AG04450 (cell line): ENCODE measurements at regions of chr22 and their contacts with region 1.

Region 1: DNA sequence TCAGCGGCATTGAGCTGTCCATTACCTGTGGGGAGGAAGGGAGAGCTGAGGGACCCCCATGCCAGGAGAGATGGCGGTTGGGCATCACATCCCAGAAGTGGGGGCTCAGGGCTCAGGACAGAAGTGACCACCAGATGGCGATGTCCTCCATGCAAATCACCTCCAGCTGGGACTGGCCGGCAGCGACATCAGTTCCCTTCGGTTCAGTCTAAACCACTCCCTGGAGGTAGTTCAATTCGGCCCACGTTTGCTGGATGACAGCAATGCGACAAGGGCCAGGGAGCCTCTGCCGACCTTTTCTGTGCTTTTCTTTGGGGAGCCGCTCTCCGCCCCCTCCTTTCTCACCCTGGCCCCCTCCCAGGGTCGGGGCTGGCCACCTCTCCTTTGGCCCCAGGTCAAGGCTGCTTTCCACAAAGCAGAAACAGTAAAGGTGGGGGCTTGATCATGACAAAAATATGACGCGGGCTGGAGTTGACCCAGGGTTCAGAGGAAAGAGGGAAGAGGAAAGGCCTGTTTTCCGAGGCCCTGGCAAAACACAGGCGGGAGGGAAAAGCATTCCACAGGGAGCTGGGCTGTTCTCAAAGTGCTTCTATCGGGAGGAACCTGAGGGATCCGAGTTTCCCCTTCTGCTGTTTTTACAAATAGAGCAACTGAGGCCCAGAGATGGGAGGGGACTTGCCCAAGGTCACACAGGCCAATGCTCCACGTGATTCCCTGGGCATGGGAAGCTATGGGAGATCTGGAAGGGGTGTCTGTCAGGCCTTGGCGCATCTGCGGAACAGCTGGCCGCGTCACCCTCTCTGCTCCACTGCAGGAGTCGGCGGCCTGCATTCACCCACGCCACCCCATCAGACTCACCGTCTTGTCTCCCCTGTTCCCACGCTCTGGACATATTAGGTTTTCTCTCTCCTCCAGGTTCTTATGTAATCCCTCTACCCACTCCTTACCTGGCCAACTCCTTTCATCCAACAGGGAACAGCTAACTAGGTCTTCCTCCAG is 54.7 kb downstream of the FBXO7 start:
- DNase-seq: peak; percentile 77
- H3K4me3 ChIP-seq: no peak overlapping the region
- H3K27ac ChIP-seq: no peak overlapping the region
- H3K27me3 ChIP-seq: peaks cover 4% of the 10 kb centered on the region
- CTCF ChIP-seq: peak; percentile 86

Region 2: DNA sequence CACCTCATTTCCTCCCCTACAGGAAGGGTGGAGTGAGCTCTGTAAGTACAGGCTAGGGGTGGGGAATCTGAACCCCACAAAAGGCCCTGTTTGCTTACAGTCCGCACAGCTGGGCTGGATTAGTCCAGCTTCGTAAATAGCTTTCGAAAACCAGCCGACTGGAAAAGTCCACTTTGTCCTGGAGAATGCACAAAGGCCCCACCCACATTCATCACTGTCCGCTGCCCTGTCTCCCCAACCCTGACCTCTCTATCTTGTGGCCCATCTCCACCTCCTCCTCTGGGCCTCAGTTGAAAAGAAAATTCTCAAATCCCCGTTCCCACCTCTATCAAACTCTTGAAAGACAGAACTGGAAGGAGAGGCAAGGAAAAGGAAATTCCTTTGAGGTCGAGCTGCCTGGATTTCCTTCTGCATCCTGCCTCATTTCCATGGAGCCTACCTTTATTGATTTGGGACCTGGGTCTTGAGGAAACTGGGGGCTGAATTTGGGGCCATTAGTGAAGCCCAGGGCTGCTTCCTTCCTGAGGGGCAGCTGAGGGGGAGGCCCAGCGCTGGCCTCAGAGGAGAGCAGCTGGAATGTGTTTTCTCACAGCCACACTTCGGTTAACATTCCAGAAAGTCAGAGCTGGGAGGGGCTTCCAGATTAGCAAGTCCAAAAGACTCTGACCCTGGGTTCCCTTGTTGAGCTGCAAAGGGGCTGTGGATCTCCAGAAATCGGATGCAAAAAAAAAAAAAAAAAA is 92.9 kb after region 1 on chr22:
- CTCF ChIA-PET with region 1: interaction called, 11 read pairs
- POLR2A ChIA-PET with region 1: interaction called, 13 read pairs
- DNase-seq: peak; percentile 94
- H3K4me3 ChIP-seq: peak overlapping the region; percentile 25
- H3K27ac ChIP-seq: peak overlapping the region; percentile 98
- H3K27me3 ChIP-seq: no peaks in the 10 kb centered on the region
- CTCF ChIP-seq: no peak

Region 3: DNA sequence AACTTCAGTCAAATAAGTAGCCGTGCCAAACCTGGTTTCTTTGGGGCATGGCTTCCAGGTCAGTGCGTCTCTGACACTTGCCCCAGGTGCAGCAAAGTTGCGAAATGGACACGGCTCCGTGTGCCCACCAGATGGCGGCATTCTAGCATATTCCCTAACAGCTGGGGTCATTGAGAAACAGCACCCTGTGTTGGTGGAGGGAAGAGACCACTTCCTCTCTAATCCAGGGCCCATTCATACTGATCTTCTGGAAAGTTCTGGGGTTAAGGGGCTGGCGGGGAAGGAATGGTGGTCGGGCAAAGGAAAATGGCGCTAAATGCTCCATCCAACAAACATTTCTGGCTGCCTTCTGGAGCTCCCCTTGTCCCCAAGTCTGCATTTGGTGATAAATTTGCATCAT is 131.0 kb after region 1 on chr22:
- CTCF ChIA-PET with region 1: interaction called, 11 read pairs
- POLR2A ChIA-PET with region 1: no interaction called
- DNase-seq: no peak
- H3K4me3 ChIP-seq: no peak overlapping the region
- H3K27ac ChIP-seq: peak overlapping the region; percentile 96
- H3K27me3 ChIP-seq: no peaks in the 10 kb centered on the region
- CTCF ChIP-seq: peak; percentile 68

Region 4: DNA sequence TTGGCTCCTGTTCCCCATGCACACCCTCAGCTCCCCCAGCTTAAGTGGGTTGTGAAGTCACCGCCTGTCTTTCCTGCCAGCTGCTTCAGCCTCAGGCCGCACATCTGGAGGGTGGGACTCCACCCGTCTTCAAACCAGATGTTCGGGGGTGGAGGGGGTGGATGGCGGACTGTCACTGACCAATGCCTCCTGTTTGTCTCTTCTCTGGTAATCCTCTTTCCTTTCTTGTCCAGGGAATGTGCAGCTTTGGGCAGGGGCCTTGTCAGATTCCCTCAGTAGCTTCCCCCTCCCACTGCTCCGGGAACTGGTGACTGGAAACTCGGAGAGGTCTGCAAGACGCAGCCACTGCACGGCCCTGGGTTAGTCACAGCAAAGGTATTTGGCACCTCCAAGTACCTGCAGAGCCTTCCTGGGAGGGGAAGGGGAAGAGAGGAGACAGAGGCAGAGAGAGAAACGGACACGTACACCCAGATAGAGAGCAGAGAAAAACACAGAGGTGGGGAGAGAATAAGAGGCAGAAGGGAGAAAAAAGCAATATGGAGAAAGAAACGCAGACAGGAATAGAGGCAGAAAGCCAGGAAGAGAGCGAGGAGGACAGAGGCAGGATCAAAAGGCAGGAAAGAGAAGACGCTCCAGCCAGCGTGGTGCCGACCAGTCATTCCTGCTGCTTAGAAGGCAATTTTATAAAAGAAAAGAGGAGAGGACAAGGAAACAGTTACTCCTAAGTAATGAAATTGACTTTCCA is 216.1 kb after region 1 on chr22:
- CTCF ChIA-PET with region 1: no interaction called
- POLR2A ChIA-PET with region 1: no interaction called
- DNase-seq: no peak
- H3K4me3 ChIP-seq: peak overlapping the region; percentile 14; the same call in 1 of the 2 replicates
- H3K27ac ChIP-seq: no peak overlapping the region
- H3K27me3 ChIP-seq: peaks cover 4% of the 10 kb centered on the region
- CTCF ChIP-seq: no peak

Region 5: GRCh38 chr22:32804531-32805360 is 275.5 kb after region 1 on chr22:
- CTCF ChIA-PET with region 1: interaction called, 330 read pairs
- POLR2A ChIA-PET with region 1: interaction called, 37 read pairs
- DNase-seq: no peak
- H3K4me3 ChIP-seq: peak overlapping the region; percentile 97
- H3K27ac ChIP-seq: peak overlapping the region; percentile 47
- H3K27me3 ChIP-seq: no peaks in the 10 kb centered on the region
- CTCF ChIP-seq: no peak

Region 6: DNA sequence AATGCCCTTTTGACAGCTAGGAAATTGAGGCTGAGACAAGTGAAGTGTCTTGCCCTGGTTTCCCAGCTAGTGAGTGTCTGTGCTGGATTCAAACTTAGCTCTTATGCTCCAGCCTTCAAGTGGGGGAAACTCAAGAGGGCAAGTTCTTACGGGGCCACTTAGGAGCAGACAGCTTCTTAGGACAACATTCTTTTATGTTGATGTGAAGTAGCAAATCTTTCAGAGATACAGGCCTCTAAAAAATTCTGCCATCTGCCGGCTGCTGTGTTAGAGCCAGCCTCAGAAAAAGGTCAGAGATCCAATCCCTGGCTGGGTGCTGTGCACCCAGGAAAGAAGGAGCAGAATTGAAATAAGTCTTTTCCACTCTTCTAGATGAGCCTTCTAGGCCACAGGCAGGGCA is 298.9 kb after region 1 on chr22:
- CTCF ChIA-PET with region 1: interaction called, 18 read pairs
- POLR2A ChIA-PET with region 1: no interaction called
- DNase-seq: no peak
- H3K4me3 ChIP-seq: no peak overlapping the region
- H3K27ac ChIP-seq: peak overlapping the region; percentile 39
- H3K27me3 ChIP-seq: no peaks in the 10 kb centered on the region
- CTCF ChIP-seq: no peak; the same call in 1 of the 2 replicates

Region 7: DNA sequence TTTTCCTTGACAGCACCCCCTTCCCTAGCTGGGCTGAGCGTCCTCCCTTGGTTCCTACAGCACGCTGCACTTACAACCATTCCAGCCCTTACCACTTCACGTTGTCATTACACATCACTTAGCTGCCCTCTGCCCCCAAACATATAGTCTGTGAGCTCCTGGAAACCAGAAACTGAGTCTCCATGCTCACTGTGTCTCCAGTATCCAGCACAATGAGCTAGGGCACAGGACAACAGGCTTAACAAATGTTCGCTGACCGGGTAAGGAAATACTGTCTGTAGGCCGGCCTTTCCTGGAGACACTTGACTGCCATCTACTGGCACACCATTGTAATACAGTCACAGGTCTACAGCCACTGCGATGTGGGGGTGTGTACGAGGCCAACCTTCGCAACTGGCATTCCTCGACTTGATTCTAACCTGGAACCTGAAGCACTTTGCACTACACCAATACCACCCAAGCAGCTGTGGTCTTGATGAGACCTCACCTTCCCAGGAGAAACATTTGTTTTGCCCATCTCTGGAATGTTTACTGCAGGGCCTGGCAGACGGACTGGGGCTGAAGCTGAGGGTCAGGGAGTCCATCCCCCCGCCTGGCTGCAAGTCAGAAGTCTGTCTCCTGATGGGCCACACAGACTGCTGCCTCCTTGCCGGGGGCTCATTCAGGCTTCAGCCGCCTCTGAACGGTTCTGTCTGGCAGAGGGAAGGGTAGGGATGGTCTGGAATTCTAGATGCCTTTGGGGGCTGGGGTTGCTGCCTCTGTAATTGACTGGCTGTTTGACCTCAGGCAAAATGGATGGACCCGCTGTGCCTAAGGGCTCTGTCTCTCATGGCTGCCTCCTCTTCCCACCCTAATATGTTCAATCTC is 456.8 kb after region 1 on chr22:
- CTCF ChIA-PET with region 1: interaction called, 29 read pairs
- POLR2A ChIA-PET with region 1: no interaction called
- DNase-seq: peak; percentile 44
- H3K4me3 ChIP-seq: no peak overlapping the region
- H3K27ac ChIP-seq: no peak overlapping the region
- H3K27me3 ChIP-seq: peaks cover 6% of the 10 kb centered on the region
- CTCF ChIP-seq: peak; percentile 92

Region 8: GRCh38 chr22:33000342-33001280 is 471.3 kb after region 1 on chr22:
- CTCF ChIA-PET with region 1: interaction called, 20 read pairs
- POLR2A ChIA-PET with region 1: no interaction called
- DNase-seq: no peak
- H3K4me3 ChIP-seq: no peak overlapping the region
- H3K27ac ChIP-seq: no peak overlapping the region
- H3K27me3 ChIP-seq: peaks cover 13% of the 10 kb centered on the region
- CTCF ChIP-seq: peak; percentile 91